PC-9 (cell line): ENCODE measurements at regions of chr1 and their contacts with region 1.

Region 1: DNA sequence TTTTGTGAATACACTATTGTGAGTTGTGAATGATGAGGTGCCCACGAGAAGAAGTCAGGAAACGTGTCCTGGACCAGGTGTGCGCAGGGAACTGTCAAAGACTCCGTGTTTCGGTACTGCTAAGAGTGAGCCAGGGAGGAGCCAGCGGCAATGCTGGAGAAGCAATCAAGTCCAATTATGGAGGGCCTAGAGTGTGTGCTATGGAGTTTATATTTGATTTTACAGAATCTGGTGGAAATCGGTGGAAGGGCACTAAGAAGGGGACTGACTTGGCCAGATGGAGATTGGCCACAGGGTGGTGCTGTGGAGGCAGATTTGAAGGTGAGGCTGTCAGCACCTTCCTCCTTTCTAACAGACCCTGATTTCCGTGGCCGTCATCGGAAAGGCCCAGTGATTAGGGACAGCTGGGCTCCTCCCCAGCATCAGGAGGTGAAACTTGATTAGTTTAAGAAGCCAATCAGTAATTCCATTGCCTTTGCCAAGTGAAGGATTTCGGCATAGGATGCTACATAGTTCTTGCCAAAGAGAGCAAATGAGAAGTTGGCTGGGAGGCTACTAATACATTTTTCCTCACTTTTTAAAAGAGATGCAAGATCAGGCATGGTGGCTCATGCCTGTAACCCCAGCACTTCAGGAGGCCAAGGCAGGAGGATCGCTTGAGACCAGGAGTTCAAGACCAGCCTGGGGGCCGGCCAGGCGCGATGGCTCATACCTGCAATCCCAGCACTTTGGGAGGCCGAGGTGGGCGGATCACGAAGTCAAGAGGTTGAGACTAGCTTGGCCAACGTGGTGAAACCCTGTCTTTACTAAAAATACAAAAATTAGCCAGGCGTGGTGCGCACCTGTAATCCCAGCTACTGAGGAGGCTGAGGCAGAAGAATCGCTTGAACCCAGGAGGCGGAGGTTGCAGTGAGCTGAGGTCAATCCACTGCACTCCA is 7.0 kb downstream of the PTCH2 start:
- DNase-seq: peak; percentile 61 to 84
- H3K4me3 ChIP-seq: no peak overlapping the region
- H3K27ac ChIP-seq: no peak overlapping the region
- H3K4me1 ChIP-seq: no peaks in the 10 kb centered on the region
- H3K27me3 ChIP-seq: no peaks in the 10 kb centered on the region
- CTCF ChIP-seq: peak; percentile 85

Region 2: DNA sequence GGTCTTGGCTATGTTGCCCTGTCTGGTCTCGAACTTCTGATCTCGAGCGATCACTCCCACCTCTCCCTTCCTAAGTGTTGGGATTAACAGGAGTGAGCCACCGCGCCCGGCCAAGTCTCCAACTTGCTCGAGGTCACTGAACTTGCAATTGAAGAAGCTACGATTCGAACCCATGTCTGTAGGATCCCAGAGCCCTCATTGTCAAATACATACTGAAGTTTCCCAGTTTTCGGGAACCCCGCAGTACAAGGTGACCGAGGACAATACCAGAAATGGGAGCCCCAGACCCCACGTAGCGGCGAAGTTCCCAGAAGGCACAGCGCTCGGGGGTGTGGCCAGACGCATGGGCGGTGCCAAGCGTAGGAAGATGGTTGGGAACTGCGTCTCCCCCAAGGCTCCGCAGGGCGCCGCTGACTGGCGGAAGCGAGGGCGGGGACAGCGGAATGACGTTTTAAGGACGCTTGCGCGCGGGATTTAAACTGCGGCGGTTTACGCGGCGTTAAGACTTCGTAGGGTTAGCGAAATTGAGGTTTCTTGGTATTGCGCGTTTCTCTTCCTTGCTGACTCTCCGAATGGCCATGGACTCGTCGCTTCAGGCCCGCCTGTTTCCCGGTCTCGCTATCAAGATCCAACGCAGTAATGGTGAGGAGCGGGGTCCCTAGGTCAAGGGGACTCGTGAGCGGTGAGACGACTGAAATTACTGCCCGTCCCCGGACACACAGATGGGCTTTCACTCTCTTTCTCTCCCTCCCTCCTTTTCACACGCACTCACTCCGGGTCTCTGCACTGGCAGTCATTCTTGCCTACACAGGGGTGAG is 96.4 kb before region 1 on chr1 and contains the start of gene KIF2C:
- CTCF ChIA-PET with region 1: no interaction called
- POLR2A ChIA-PET with region 1: interaction called, 29 read pairs
- intact Hi-C with region 1: no loop called
- DNase-seq: peak; percentile 92 to 98
- H3K4me3 ChIP-seq: peak within 1 kb of the TSS; percentile 65
- H3K27ac ChIP-seq: peak within 1 kb of the TSS; percentile 79
- H3K4me1 ChIP-seq: peaks cover 18% of the 10 kb centered on the region
- H3K27me3 ChIP-seq: no peaks in the 10 kb centered on the region
- CTCF ChIP-seq: 0 out of 2 replicates have a peak, but pooled peaks have one; percentile 16
- total RNA-seq, gene KIF2C: 103 and 119 TPM in 2 replicates

Region 3: DNA sequence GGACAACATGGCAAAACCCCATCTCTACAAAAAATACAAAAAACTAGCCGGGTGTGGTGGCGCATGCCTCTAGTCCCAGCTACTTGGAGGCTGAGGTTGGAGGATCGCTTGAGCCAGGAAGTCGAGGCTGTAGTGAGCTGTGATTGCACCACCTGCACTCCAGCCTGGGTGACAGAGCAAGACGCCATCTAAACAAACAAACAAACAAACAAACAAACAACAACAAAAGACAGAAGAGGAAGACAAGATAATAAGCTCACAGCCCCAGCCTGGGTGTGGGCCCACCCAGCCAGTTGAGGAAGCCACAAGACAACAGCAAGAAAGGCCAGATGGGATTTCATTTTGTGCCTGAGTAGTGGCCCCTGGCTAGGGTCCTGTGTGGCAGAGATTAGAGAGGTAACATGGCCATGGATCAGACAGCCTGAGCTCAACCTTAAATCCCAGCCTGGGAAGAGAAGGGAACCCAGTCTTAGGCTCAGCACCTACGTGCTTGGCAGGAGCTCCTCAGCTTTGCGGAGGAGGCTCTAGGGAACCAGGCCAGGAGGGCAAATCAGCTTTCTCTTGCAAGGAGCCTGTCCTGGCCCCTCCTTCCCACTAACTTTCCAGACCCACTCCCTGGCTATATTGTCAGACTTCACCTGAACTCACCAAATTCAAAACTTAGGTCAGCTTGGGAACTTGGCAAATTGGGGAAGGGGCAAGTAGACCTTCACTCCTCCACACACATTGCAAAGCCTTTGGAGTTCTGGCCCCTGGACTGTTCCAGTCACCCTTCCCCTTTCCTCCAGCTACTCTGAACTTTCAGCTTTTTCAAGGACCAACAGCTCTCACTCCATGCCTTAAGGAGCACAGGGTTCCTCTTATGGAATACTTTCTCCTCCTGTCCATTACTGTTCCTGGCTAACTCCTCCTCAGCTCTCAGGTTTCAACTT is 43.0 kb before region 1 on chr1:
- CTCF ChIA-PET with region 1: no interaction called
- POLR2A ChIA-PET with region 1: no interaction called
- intact Hi-C with region 1: loop called (anchors 2 kb)
- DNase-seq: no peak
- H3K4me3 ChIP-seq: no peak overlapping the region
- H3K27ac ChIP-seq: peak overlapping the region; percentile 36; the same call in 1 of the 2 replicates
- H3K4me1 ChIP-seq: peaks cover 13% of the 10 kb centered on the region
- H3K27me3 ChIP-seq: no peaks in the 10 kb centered on the region
- CTCF ChIP-seq: no peak

Region 4: GRCh38 chr1:44799770-44800584 is 36.0 kb before region 1 on chr1 and contains the start of gene PLK3:
- CTCF ChIA-PET with region 1: no interaction called
- POLR2A ChIA-PET with region 1: no interaction called
- intact Hi-C with region 1: loop called (anchors 2 kb)
- DNase-seq: peak; percentile 88 to 99
- H3K4me3 ChIP-seq: peak within 1 kb of the TSS; percentile 82
- H3K27ac ChIP-seq: peak within 1 kb of the TSS; percentile 81
- H3K4me1 ChIP-seq: peaks cover 45% of the 10 kb centered on the region
- H3K27me3 ChIP-seq: no peaks in the 10 kb centered on the region
- CTCF ChIP-seq: peak; percentile 88
- total RNA-seq, gene PLK3: 12.7 and 13.0 TPM in 2 replicates

Region 5: DNA sequence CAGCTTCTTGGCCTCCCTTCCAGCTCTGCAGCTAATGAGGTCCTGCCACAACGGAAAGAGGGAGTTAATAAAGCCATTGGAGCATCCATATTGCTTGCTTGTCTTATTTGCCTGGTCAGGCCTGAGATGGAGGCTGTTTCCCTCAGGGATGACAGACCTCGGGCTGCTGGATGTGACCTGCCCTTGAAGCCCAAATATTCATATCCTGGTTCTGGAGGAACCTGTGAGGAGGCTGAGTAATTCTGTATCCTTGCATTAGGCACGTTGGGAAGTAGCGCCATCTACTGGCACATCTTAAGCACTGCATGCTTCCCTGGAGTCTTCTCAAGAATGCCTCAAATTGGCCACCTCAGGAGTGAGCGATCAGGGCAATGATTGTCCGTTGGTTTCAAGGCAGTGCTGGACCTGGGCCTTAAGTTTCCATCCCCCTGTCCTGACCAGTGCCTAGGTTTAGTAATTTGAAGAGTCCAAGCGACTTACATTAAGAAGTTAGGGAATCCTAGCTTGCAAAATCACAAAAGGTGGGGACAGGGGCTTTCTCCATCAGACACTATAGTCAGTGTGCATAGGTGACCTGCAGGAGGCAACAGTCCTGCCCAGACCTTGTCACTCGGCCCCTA is 734.1 kb after region 1 on chr1:
- CTCF ChIA-PET with region 1: no interaction called
- POLR2A ChIA-PET with region 1: no interaction called
- intact Hi-C with region 1: loop called (anchors 5 kb)
- DNase-seq: peak; percentile 62 to 64
- H3K4me3 ChIP-seq: no peak overlapping the region
- H3K27ac ChIP-seq: no peak overlapping the region
- H3K4me1 ChIP-seq: peaks cover 3% of the 10 kb centered on the region; the same call in 1 of the 2 replicates
- H3K27me3 ChIP-seq: no peaks in the 10 kb centered on the region
- CTCF ChIP-seq: peak; percentile 99